Activated T-helper 2 cell treated with anti-CD3 and anti-CD28 coated beads, Interferon-gamma antibody, Interleukin-2, Interleukin-4, amounts not matched to agents 10 μg/mL and 5 μg/mL and 100 μg/mL, durations not matched to agents 14 hours and 24 hours and 36 hours (primary cell): ENCODE measurements at regions of chr7 and their contacts with region 1.

Region 1: DNA sequence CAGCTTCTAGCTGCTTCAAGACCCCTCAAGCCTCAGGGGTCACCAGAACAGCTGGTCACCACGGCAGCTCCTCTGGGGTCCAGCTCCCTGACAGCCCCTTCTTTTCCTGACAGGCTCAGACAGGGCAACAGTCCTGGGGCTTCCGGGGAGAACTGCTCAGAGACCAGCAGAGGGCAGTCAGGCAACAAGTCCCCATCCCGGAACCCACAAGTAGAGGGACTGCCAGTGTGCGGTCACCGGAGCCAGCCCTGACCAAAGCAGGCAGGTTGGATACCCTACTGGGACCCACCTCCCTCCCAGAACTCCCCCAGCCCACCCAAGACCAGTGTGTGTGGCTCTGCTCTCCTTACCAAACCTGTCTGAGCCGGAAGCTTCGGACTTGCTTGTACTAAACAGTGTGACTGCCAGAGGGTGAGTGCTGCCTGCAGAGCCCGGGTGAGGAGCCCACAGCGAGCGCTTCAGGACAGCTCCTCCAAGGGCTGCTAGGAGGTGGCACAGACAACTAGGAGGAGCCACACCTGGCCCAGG is 40.3 kb downstream of the YKT6 start:
- DNase-seq: peak; percentile 54
- H3K4me3 Mint-ChIP-seq: no peak overlapping the region
- H3K27ac Mint-ChIP-seq: no peak overlapping the region
- H3K4me1 Mint-ChIP-seq: peaks cover 4% of the 10 kb centered on the region
- H3K27me3 Mint-ChIP-seq: no peaks in the 10 kb centered on the region

Region 2: DNA sequence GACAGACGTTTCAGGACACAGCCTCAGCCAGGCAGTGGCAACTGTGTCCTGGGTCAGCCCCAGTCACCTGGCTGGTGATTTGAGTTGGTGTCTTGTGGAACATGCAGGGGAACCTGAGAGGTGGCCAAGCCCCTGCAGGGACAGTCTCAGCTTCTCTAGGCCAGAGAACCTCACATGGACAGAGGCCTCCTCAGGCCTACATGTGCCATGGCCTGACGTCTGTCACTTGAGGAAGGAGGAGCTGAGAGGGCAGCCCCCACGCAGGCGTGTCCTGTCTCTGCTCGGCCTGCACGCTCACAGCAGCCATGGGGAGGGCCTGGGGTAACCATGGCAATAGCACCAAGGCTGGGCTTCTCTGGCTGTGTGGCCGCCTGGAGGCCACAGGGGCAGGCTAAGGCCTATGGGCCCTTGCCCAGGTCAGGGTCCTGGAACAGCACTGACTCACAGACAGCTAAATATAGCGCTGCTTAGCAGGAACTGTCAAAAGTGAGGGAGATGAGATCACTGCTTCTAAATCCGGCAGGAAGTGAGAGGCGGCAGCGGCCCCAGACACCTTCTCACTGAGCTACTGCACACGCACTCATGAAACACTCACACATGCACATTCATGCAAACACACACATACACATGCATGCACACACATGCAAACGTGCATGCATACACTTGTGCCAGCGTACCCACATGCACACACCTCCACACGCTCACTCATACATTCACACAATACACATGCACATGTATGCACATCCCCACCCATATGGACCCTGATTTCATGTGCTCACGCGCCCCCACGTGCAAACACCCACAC is 16.8 kb after region 1 on chr7:
- intact Hi-C with region 1: loop called (anchors 1 kb)
- DNase-seq: peak; percentile 64
- H3K4me3 Mint-ChIP-seq: peak overlapping the region; percentile 9
- H3K27ac Mint-ChIP-seq: peak overlapping the region; percentile 61
- H3K4me1 Mint-ChIP-seq: peaks cover 30% of the 10 kb centered on the region
- H3K27me3 Mint-ChIP-seq: no peaks in the 10 kb centered on the region

Region 3: GRCh38 chr7:44307301-44307900 is 66.4 kb after region 1 on chr7:
- intact Hi-C with region 1: loop called (anchors 1 kb)
- DNase-seq: peak; percentile 7
- H3K4me3 Mint-ChIP-seq: no peak overlapping the region
- H3K27ac Mint-ChIP-seq: no peak overlapping the region
- H3K4me1 Mint-ChIP-seq: peaks cover 5% of the 10 kb centered on the region
- H3K27me3 Mint-ChIP-seq: peaks cover 21% of the 10 kb centered on the region

Region 4: GRCh38 chr7:44477063-44477830 is 236.2 kb after region 1 on chr7:
- intact Hi-C with region 1: loop called (anchors 1 kb)
- DNase-seq: peak; percentile 46
- H3K4me3 Mint-ChIP-seq: no peak overlapping the region
- H3K27ac Mint-ChIP-seq: no peak overlapping the region
- H3K4me1 Mint-ChIP-seq: peaks cover 12% of the 10 kb centered on the region
- H3K27me3 Mint-ChIP-seq: no peaks in the 10 kb centered on the region

Region 5: GRCh38 chr7:44565097-44565794 is 324.2 kb after region 1 on chr7:
- intact Hi-C with region 1: loop called (anchors 1 kb)
- DNase-seq: peak; percentile 42
- H3K4me3 Mint-ChIP-seq: no peak overlapping the region
- H3K27ac Mint-ChIP-seq: peak overlapping the region; percentile 35
- H3K4me1 Mint-ChIP-seq: peaks cover 8% of the 10 kb centered on the region
- H3K27me3 Mint-ChIP-seq: no peaks in the 10 kb centered on the region